Activated B cell treated with CpG ODN at 0.5 μM for 24 hours (primary cell): ENCODE measurements at regions of chr5 and their contacts with region 1.

Region 1: GRCh38 chr5:132103332-132103951 is 29.9 kb downstream of the CSF2 start:
- DNase-seq: no peak
- ATAC-seq: peak; percentile 70
- H3K4me3 Mint-ChIP-seq: peak overlapping the region; percentile 53
- H3K27ac Mint-ChIP-seq: peak overlapping the region; percentile 84
- H3K4me1 Mint-ChIP-seq: peaks cover 82% of the 10 kb centered on the region
- H3K27me3 Mint-ChIP-seq: no peaks in the 10 kb centered on the region
- CTCF ChIP-seq: no peak

Region 2: GRCh38 chr5:132064738-132065331 is 38.6 kb before region 1 on chr5:
- CTCF ChIA-PET with region 1: interaction called, 4 read pairs
- POLR2A ChIA-PET with region 1: no interaction called
- intact Hi-C with region 1: loop called (anchors 1 kb)
- DNase-seq: peak; percentile 64
- ATAC-seq: peak; percentile 86
- H3K4me3 Mint-ChIP-seq: no peak overlapping the region
- H3K27ac Mint-ChIP-seq: no peak overlapping the region
- H3K4me1 Mint-ChIP-seq: peaks cover 8% of the 10 kb centered on the region
- H3K27me3 Mint-ChIP-seq: no peaks in the 10 kb centered on the region
- CTCF ChIP-seq: peak; percentile 35

Region 3: GRCh38 chr5:132180134-132180745 is 76.8 kb after region 1 on chr5:
- CTCF ChIA-PET with region 1: no interaction called
- POLR2A ChIA-PET with region 1: interaction called, 3 read pairs
- intact Hi-C with region 1: loop called (anchors 1 kb)
- DNase-seq: no peak
- ATAC-seq: peak; percentile 36
- H3K4me3 Mint-ChIP-seq: no peak overlapping the region
- H3K27ac Mint-ChIP-seq: no peak overlapping the region
- H3K4me1 Mint-ChIP-seq: peaks cover 24% of the 10 kb centered on the region
- H3K27me3 Mint-ChIP-seq: no peaks in the 10 kb centered on the region
- CTCF ChIP-seq: no peak

Region 4: DNA sequence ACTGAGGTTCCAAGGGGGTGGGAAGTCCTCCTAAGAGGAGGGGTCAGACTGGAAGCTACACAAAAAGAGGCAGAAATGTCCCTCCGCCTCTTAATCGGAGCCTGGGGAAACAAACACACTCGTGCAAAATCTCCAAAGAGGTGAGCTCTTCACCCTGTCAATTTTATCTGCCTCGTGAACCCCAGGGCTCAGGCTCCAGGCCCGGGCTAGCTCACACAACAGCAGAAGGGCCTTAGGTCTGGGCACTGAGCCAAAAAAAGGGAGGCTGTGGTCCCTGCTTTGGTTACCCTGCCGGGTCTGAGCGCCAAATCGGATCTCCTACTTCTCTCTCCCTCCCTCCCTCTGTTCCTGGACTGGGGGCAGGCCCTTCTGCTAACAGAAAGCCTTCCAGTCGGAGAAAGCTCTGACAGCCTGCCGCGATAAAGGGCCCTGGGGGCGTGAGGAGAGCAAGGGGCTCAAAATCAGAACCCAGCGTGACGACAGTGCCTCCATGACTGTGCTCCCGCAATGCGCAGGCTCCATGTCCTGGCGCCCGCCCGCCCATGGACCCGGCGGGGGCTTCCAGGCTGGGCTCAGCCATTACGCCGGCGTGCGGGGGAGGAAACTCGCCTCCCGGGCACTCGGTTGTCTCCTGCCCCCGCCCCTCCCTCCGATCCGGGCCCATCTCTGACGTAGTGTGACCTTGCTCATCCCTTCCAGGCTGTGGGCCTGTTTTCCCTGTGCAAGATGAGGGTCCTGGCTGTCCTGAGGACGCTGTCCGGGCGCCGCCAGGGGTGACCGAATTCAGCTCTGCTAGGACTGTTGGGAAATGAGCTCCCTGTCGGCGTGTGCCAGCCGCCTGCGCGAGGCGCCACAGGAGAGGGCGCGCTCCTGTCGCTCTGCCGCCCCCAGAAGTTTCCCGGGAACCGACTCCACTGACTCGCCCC is 189.9 kb after region 1 on chr5:
- CTCF ChIA-PET with region 1: no interaction called
- POLR2A ChIA-PET with region 1: no interaction called
- intact Hi-C with region 1: loop called (anchors 1 kb)
- DNase-seq: peak; percentile 56
- ATAC-seq: peak; percentile 43
- H3K4me3 Mint-ChIP-seq: peak overlapping the region; percentile 87
- H3K27ac Mint-ChIP-seq: peak overlapping the region; percentile 76
- H3K4me1 Mint-ChIP-seq: peaks cover 15% of the 10 kb centered on the region
- H3K27me3 Mint-ChIP-seq: peaks cover 34% of the 10 kb centered on the region
- CTCF ChIP-seq: no peak